ENCODE measurements at regions of chr13 and their contacts with region 1.

Region 1: DNA sequence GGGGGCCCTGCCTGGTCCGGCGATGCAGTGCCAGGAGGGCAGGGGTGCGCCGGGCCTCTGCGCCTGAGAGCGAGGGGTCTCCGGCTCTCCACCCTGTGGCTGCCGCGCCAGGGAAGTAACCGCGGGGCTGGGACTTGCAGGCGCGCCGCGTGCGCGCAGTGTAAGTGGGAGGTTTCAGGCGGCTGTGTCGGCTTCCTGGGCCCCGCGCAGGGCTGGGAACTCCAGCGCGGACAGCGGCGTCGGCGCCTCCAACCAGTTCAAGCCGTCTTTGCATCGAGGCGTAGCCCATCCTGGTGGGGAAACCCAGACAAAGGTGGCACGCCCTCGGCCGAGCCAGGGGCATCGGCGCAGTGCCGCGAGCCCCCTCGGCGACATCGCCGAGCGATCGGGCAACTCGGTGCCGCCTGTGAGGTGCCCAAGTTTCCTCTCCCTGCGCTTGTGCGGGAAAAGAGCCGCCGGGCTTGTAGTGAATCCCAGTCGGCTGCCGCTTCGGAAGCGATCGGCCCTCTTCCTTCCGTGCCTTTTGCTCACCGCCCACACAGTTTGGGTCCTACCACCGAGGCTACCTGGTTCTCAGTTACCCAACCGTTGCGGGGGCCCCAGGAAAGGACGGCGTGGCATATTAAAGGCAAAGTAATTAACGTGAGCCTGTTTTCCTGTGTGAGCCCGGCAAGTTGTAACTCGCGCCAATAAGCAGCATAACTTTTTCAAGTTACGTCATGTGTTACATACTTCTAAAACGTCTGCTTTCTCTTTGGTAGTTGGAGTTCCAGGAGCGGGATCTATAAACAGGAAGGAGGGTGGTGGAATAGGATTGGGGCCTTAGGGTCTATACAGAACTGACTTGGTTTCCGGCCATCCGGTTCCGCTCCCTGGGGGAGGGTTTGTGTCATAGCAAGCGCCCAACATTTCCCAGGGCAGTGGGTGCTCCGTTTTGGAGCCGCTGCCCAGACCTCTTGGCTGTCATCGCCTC is 1.2 kb downstream of the LRCH1 start:
- DNase-seq: peak; percentile 14
- H3K4me3 ChIP-seq: peak overlapping the region; percentile 86 to 98 (median 92)
- H3K27ac ChIP-seq: peak overlapping the region; percentile 86 to 96 (median 94)
- H3K4me1 ChIP-seq: peaks cover 11 to 45% (median 21%) of the 10 kb centered on the region in 3 donors
- H3K27me3 ChIP-seq: peaks cover 0 to 4% (median 0%) of the 10 kb centered on the region in 4 donors
- CTCF ChIP-seq: peak in 3 of 6 experiments; percentile 23 to 41 (median 30)
- POLR2A ChIP-seq: peak in 1 of 4 donors; percentile 37

Region 2: DNA sequence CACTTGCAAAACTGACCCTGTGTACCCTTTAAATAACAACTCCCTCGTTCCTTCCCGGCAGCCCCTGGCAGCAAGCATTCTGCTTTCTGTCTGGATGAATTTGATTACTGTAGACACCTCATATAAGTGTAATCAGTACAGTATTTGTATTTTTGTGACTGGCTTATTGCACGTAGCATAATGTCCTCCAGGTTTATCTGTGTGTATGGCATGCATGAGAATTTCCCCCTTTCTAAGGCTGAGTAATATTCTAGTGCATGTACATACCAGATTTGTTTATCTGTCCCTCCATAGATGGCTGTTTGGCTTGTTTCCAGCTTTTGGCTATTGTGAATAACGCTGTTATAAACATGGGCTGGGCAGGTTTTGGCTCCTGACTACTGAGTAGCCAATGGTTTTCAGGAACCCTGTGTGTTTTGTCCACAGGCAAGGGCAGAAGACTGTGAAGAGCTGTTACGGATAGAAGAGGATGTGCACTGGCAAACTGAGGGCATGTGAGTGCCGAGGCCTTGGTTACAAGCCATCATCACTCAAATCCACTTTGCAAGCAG is 144.8 kb after region 1 on chr13:
- intact Hi-C with region 1: loop called (anchors 10 kb)
- DNase-seq: no peak
- H3K4me3 ChIP-seq: no peak overlapping the region
- H3K27ac ChIP-seq: peak overlapping the region in 3 of 4 donors; percentile 10 to 31 (median 24)
- H3K4me1 ChIP-seq: peaks cover 0 to 16% (median 0%) of the 10 kb centered on the region in 3 donors
- H3K27me3 ChIP-seq: no peaks in the 10 kb centered on the region
- CTCF ChIP-seq: no peak
- POLR2A ChIP-seq: no peak

Region 3: GRCh38 chr13:46721054-46721453 is 166.9 kb after region 1 on chr13:
- intact Hi-C with region 1: loop called (anchors 5 kb)
- DNase-seq: no peak
- H3K4me3 ChIP-seq: no peak overlapping the region
- H3K27ac ChIP-seq: no peak overlapping the region
- H3K4me1 ChIP-seq: peaks cover 0 to 5% (median 0%) of the 10 kb centered on the region in 3 donors
- H3K27me3 ChIP-seq: no peaks in the 10 kb centered on the region
- CTCF ChIP-seq: peak; percentile 15 to 73 (median 63)
- POLR2A ChIP-seq: no peak

Measured in esophagus squamous epithelium (tissue), 5 donors.